Left cardiac atrium (tissue), 4 donors: ENCODE measurements at regions of chr3 and their contacts with region 1.

Region 1: DNA sequence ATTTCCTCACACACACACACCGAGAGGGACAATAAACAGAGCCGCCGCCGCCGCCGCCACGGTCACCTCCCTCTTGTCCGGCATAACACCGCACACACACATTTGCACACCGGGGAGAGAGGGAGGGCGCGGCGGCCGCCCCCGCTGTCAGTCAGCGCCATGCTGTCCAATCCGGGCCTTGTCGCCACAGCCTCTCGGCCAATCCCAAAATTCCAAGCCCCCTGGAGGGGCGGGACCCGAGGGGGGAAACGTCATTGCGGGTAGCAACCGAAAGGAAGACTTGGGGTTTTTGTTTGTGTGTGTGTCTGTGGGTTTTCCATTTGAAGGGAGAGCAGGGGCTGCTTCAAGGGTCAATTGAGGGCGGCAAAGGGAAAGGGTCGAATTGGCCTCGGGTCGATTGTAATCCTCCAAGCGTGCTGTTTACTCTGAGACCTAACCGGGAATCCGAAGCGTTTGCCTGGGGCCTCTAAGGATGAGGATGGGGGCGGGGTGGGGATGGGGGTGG is at the start of gene TOP2B:
- DNase-seq: peak; percentile 95
- ATAC-seq: peak; percentile 98 to 99
- total RNA-seq, gene TOP2B: 79.1 to 101 TPM

Region 2: GRCh38 chr3:25782938-25783660 is 118.2 kb after region 1 on chr3 and contains the start of gene NGLY1:
- intact Hi-C with region 1: loop called in 1 of 2 experiments (anchors 5 kb)
- DNase-seq: peak; percentile 91
- ATAC-seq: peak; percentile 98 to 99
- total RNA-seq, gene NGLY1: 31.4 to 31.5 TPM

Region 3: DNA sequence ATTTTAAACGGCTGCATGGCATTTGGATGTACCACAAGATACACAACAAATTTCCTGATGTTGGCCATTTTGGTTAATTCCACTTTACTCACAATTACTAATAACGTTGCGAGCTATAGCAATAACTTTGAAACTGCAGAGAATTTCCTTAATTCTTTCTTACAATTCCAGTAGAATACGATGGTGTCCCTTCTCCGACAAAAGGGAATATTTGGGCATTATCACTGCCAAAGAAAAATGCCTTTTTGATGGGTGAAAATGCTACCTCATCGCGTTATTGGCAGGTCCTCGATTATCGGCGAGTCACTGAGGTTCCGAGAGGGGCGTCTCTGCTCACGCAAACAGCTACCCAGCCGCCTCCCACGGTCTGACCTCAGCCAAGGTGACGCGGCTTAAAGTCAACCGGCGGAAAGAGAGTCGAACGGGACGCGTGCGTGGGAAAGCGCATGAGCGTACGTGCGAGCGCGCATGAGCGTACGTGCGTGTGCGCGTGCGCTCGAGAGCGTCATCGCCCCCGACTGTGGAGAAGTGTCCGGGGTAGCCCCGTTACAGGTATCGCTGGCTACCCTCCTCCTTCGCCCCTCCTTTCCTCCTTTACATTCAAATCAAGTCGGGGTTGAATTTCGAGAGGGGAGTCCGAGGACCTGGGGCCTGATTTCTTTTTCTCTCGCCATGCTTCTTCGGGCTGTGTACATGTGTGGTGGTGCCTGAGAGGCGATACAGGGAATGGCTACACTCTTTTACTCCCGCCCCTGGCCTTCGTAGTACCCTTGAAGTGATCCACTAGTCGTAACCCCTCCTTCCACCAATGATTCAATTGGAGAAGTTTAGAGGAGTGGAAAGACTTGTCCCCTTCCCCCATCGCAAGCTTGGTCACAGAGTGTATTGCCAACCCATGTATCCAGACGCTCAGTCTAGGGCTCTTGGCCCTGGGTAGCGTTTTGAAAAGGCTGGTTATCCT is 125.0 kb after region 1 on chr3 and contains the start of gene OXSM:
- intact Hi-C with region 1: loop called in 1 of 2 experiments (anchors 5 kb)
- DNase-seq: peak; percentile 96
- ATAC-seq: peak; percentile 99
- total RNA-seq, gene OXSM: 13.9 to 14.6 TPM